AG04450 (cell line): ENCODE measurements at regions of chr1 and their contacts with region 1.

Region 1: GRCh38 chr1:204806943-204807687 is 63.5 kb upstream of the NFASC start:
- DNase-seq: peak; percentile 33
- H3K4me3 ChIP-seq: peak overlapping the region; percentile 62
- H3K27ac ChIP-seq: no peak overlapping the region
- H3K27me3 ChIP-seq: peaks cover 3% of the 10 kb centered on the region
- CTCF ChIP-seq: peak; percentile 98

Region 2: DNA sequence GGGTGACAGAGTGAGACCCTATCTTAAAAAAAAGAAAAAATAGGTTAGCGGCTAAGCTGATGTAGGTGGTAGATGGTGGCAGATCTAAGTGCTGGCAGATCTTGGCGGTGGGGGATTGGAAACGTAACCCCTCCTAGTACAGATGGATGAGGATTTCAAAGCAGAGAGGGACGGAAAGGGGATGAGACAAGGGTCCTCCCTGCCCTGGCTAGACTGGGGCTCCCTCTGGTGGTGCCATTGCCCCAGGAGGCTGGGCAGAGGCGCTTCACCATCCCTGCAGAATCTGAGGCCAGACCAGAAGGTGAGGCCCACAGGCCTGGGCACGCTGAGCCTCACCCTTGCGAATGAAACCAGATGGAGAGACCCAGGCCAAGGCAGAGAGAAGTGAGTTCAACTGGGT is 440.4 kb before region 1 on chr1:
- CTCF ChIA-PET with region 1: no interaction called
- POLR2A ChIA-PET with region 1: no interaction called
- DNase-seq: no peak
- H3K4me3 ChIP-seq: no peak overlapping the region
- H3K27ac ChIP-seq: no peak overlapping the region
- H3K27me3 ChIP-seq: peaks cover 37% of the 10 kb centered on the region
- CTCF ChIP-seq: peak; percentile 56

Region 3: GRCh38 chr1:204506961-204507387 is 300.1 kb before region 1 on chr1:
- CTCF ChIA-PET with region 1: interaction called, 42 read pairs
- POLR2A ChIA-PET with region 1: no interaction called
- DNase-seq: peak; percentile 88
- H3K4me3 ChIP-seq: peak overlapping the region; percentile 52
- H3K27ac ChIP-seq: peak overlapping the region; percentile 85
- H3K27me3 ChIP-seq: no peaks in the 10 kb centered on the region
- CTCF ChIP-seq: no peak

Region 4: DNA sequence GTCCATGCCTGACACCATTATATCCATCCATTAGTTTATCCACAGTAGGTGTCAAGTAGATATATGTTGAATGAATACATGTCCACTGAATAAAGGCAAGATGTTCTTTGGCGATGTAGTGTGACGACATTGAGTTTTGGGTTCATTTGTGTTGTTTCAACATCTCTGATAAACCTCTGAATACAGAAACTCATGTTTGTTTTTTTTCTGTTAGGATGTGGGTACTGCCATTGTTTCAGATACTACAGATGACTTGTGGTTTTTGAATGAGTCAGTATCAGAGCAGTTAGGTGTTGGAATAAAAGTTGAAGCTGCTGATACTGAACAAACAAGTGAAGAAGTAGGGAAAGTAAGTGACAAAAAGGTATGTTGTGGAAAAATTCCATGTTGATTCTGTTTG is 262.8 kb before region 1 on chr1:
- CTCF ChIA-PET with region 1: interaction called, 14 read pairs
- POLR2A ChIA-PET with region 1: no interaction called
- DNase-seq: no peak
- H3K4me3 ChIP-seq: no peak overlapping the region
- H3K27ac ChIP-seq: no peak overlapping the region
- H3K27me3 ChIP-seq: no peaks in the 10 kb centered on the region
- CTCF ChIP-seq: no peak

Region 5: GRCh38 chr1:204578867-204579664 is 228.0 kb before region 1 on chr1:
- CTCF ChIA-PET with region 1: interaction called, 364 read pairs
- POLR2A ChIA-PET with region 1: no interaction called
- DNase-seq: no peak
- H3K4me3 ChIP-seq: no peak overlapping the region
- H3K27ac ChIP-seq: no peak overlapping the region
- H3K27me3 ChIP-seq: peaks cover 8% of the 10 kb centered on the region
- CTCF ChIP-seq: no peak

Region 6: DNA sequence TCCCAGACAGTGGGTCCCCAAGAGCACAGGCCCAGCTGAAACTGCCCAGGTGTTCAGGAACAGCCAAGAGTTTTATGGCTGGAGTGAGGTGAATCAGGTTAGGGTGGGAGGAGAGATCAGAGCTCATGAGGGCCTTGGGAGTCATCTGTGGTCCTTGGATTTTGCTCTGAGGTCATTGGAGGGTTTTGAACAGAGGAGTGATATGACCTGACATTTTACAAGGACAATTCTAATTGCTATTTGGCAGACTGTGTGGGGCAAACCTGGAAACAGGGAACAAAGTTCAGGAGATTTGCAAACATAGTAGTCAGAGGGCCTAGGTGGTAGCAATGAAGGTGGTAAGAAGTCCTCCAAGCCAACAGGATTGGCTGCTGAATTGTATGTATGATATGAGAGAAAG is 90.5 kb before region 1 on chr1:
- CTCF ChIA-PET with region 1: no interaction called
- POLR2A ChIA-PET with region 1: no interaction called
- DNase-seq: no peak
- H3K4me3 ChIP-seq: no peak overlapping the region
- H3K27ac ChIP-seq: no peak overlapping the region
- H3K27me3 ChIP-seq: peaks cover 22% of the 10 kb centered on the region
- CTCF ChIP-seq: no peak

Region 7: GRCh38 chr1:204746838-204747442 is 60.2 kb before region 1 on chr1:
- CTCF ChIA-PET with region 1: interaction called, 25 read pairs
- POLR2A ChIA-PET with region 1: no interaction called
- DNase-seq: no peak
- H3K4me3 ChIP-seq: no peak overlapping the region
- H3K27ac ChIP-seq: no peak overlapping the region
- H3K27me3 ChIP-seq: peaks cover 10% of the 10 kb centered on the region
- CTCF ChIP-seq: peak; percentile 97

Region 8: DNA sequence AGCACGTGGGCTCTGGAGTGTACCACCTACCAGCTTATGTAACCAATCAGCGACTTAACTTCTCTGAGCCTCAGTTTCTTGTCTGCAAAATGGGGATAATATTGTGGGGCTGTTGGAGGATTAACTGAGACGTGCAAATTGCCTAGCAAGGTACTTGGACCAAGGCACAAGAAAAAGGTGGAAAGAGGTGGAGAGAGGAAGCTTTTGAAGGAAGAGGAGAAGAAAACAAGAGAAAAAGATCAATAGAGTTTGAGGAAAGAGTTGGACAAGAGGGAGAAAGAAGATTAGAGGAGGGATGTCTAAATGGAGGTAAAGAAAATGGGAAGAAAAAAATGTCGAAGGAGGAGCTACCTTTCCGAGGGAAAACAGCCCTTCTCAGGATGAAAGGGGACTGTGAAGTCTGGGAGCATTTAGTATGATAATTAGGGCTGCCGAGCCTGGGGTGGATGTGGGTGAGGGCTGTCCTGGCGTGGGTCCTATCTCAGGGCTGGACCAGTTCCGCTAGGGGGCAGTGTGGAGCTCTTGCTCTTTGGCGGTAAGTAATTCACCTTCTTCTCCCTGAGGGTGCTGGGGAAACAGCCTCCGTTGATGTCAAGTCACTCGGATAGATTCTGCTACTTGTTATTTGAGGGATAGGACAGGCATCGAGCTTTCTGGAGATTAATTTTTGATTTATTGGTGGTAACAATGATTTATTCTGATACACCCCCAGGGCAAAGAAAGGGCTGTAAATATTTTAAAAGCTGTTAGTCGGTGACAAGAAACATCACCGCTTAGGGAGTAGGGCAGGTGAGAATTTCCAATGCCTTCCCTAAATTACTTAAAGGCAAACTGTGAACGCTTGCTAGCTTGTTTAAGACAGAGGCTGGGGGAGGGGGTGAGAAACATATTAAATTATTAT is 15.4 kb before region 1 on chr1:
- CTCF ChIA-PET with region 1: interaction called, 28 read pairs
- POLR2A ChIA-PET with region 1: no interaction called
- DNase-seq: no peak
- H3K4me3 ChIP-seq: no peak overlapping the region
- H3K27ac ChIP-seq: no peak overlapping the region
- H3K27me3 ChIP-seq: peaks cover 5% of the 10 kb centered on the region
- CTCF ChIP-seq: peak; percentile 61

Region 9: GRCh38 chr1:204837440-204838084 is 30.4 kb after region 1 on chr1:
- CTCF ChIA-PET with region 1: interaction called, 31 read pairs
- POLR2A ChIA-PET with region 1: no interaction called
- DNase-seq: peak; percentile 11
- H3K4me3 ChIP-seq: no peak overlapping the region
- H3K27ac ChIP-seq: no peak overlapping the region
- H3K27me3 ChIP-seq: no peaks in the 10 kb centered on the region
- CTCF ChIP-seq: peak; percentile 12; the same call in 1 of the 2 replicates